ENCODE measurements at regions of chr3 and their contacts with region 1.

Region 1: DNA sequence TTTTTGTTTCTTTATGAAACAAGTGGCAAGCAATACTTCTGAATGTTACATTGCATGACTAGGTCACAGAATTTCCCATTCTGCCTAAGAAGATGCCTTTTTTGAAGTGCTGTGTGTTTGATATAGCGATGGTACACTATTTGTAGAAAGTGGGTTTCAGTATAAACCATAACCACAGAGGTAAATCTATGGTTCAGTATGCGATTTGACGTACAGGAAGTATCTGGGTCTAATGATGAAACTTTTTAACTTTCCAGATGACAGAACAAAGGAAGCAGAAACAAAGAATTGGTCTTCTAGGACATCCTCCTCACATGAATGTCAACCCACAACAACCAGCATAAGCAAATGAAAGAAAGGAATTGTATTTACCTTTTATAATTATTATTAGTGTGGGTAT is 133.4 kb upstream of the BHLHE40 start:
- DNase-seq: peak in 1 of 3 donors; percentile 16
- H3K4me3 ChIP-seq: no peak overlapping the region
- H3K4me3 Mint-ChIP-seq: no peak overlapping the region
- H3K27ac ChIP-seq: no peak overlapping the region
- H3K27ac Mint-ChIP-seq: peak overlapping the region in 1 of 7 donors; percentile 51
- H3K4me1 ChIP-seq: peaks cover 0 to 11% of the 10 kb centered on the region in 2 donors
- H3K4me1 Mint-ChIP-seq: peaks cover 8% of the 10 kb centered on the region
- H3K27me3 ChIP-seq: no peaks in the 10 kb centered on the region
- H3K27me3 Mint-ChIP-seq: no peaks in the 10 kb centered on the region
- CTCF ChIP-seq: no peak

Region 2: DNA sequence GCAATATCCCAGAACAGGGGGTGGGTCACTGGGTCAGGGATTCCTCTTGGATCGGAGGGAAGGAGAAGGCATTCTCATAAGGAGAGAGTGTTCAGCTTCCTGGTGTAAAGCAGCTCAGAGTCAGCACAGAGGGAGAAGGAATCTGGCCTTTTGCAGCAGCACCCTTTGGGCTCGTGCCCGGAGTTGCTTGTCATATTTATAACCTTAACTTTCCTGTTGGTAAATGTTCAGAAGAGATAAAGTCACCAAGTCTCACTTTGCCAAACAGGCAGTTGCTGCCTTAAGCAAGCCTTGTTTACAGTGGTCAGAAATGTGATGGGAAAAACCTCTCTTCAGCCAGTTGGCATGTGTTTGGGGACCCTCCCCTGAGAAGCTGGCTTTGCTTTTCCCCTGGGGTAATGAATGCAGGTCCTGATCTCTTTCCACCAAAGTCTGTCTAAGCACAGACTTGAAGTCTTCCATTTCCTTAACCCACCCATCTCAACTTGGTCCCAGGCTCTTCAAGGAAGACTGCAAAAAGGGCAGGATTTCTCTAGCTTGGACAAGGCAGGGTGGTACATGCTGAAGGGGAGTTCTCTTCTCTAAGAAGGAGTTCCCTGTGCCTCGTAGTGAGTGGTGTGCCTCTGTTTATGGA is 73.6 kb before region 1 on chr3:
- intact Hi-C with region 1: loop called in 1 of 2 experiments (anchors 5 kb)
- DNase-seq: no peak
- H3K4me3 ChIP-seq: no peak overlapping the region
- H3K4me3 Mint-ChIP-seq: no peak overlapping the region
- H3K27ac ChIP-seq: no peak overlapping the region
- H3K27ac Mint-ChIP-seq: peak overlapping the region in 1 of 7 donors; percentile 52
- H3K4me1 ChIP-seq: no peaks in the 10 kb centered on the region
- H3K4me1 Mint-ChIP-seq: peaks cover 10% of the 10 kb centered on the region
- H3K27me3 ChIP-seq: no peaks in the 10 kb centered on the region
- H3K27me3 Mint-ChIP-seq: peaks cover 0 to 1% (median 0%) of the 10 kb centered on the region in 3 donors
- CTCF ChIP-seq: no peak

Region 3: DNA sequence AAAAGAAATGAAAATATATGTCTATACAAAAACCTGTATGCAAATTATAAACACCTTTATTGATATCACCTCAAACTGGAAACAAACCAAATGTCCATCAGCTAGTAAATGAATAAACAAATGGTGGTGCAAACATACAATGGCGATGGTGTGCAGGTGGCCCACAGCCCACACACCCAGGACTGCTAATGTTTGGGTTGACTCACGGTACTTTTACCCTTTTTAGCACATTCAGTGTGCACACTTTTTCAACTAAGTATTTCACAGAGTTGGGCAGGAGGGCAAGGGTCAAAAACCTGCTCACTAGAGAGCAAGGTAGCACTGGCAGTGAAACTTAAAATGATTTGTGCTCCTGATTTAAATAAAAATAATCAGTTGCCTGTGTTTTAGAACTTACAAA is 10.3 kb after region 1 on chr3:
- intact Hi-C with region 1: no loop called
- DNase-seq: no peak
- H3K4me3 ChIP-seq: no peak overlapping the region
- H3K4me3 Mint-ChIP-seq: peak overlapping the region in 1 of 2 donors; percentile 23
- H3K27ac ChIP-seq: no peak overlapping the region
- H3K27ac Mint-ChIP-seq: no peak overlapping the region
- H3K4me1 ChIP-seq: peaks cover 5 to 21% of the 10 kb centered on the region in 2 donors
- H3K4me1 Mint-ChIP-seq: peaks cover 31% of the 10 kb centered on the region
- H3K27me3 ChIP-seq: no peaks in the 10 kb centered on the region
- H3K27me3 Mint-ChIP-seq: peaks cover 0 to 3% (median 3%) of the 10 kb centered on the region in 3 donors
- CTCF ChIP-seq: no peak